ENCODE measurements at regions of chr9 and their contacts with region 1.

Region 1: GRCh38 chr9:130498298-130498917 is 53.6 kb downstream of the ASS1 start:
- DNase-seq: no peak
- H3K4me3 ChIP-seq: no peak overlapping the region
- H3K27ac ChIP-seq: no peak overlapping the region
- H3K4me1 ChIP-seq: no peaks in the 10 kb centered on the region
- H3K27me3 ChIP-seq: no peaks in the 10 kb centered on the region
- CTCF ChIP-seq: no peak
- POLR2A ChIP-seq: no peak

Region 2: GRCh38 chr9:130940693-130941576 is 442.5 kb after region 1 on chr9:
- intact Hi-C with region 1: loop called (anchors 5 kb)
- DNase-seq: peak; percentile 73 to 84
- H3K4me3 ChIP-seq: no peak overlapping the region
- H3K27ac ChIP-seq: no peak overlapping the region
- H3K4me1 ChIP-seq: peaks cover 9 to 16% of the 10 kb centered on the region in 2 donors
- H3K27me3 ChIP-seq: peaks cover 7 to 73% of the 10 kb centered on the region in 2 donors
- CTCF ChIP-seq: peak; percentile 64 to 90 (median 86)
- POLR2A ChIP-seq: no peak

Measured in breast epithelium (tissue), 4 donors.